ENCODE measurements at regions of chr1 and their contacts with region 1.

Region 1: DNA sequence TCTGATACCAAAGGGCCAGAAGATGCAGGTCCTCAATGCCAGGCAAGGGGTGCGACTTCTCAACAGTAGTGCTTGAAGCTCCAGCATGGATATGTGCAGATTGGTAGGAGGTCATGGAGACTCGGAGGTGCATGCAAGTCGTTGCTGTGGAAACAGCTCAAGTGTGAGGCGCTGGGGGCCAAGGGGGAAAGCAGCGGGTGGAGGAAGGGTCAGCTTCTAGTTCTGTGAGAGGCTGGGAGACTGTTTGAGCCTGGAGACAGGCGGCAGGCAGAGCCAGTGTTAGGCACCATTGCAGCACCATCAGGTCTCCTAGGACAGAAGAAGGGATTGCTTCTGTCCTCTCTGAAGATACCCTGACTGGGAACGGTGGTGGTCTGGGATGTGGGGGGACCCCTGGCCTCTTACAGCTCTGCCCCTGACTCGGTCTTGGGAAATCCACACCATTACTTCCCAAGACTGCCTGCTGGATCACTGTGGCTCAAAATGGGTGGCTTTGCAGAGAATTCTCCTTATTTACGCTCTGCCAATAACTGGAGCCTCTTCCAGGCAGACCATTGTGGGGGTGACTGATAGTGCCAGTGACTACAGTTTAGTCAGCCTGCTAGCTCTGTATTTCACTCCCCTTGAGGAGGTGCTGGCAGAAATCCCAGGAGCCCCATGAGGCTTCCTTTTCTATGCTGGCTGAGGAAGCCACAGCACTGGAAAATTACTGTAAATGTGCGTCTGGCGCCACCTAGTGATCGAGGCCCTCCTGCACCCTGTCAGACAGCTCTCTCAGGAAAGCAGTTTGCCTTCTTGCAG is 46.3 kb upstream of the VANGL1 start:
- DNase-seq: peak; percentile 93
- ATAC-seq: peak; percentile 92

Region 2: DNA sequence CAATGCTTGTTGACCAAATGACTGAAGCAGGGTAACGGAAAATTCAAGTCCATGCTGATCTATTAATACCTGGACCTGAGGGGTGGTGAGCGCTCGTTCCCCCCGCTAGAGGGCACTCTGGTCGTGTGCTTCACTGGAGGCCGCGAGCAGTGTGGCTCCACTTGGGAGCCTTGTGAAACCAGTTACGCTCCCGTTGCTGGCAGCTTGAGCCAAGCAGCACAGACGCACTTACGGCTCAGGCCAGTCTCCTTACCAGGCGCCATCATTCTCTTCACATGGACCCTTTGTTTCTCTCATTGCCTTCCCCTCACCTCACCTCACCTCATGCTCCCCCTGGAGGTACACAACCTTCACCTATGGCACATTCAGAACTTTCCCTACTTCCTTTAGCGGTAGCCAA is 456.5 kb before region 1 on chr1:
- intact Hi-C with region 1: loop called (anchors 5 kb)
- DNase-seq: peak; percentile 93
- ATAC-seq: peak; percentile 93

Region 3: GRCh38 chr1:115545791-115546733 is 49.4 kb before region 1 on chr1:
- intact Hi-C with region 1: loop called (anchors 5 kb)
- DNase-seq: no peak
- ATAC-seq: peak; percentile 91

Measured in Right ventricle myocardium superior (tissue), 1 donor.